SK-N-SH (cell line): ENCODE measurements at regions of chr2 and their contacts with region 1.

Region 1: DNA sequence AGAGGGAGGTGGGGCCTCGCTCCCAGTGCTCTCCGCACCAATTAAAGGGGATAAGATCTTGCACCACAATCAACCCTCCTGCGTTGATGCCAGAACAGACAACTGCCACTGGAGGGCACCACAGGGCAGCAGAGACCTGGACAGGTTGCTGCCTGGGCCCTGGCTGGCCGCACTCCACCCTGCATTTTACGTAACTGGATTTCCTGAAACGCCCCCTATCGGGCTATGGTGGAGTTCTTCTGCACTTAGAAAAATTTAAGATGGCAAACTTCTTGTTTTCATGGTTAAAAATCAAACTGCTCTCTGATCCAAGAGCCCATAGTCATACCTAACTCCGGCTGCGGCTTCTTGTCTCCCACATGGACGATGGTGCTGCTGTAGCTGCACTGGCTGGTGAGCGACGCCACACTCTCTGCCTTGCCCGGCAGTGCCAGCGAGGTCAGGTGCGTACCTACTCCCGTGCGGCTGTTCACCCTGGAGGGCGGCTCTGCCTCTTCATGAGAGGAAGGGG is 16.8 kb upstream of the HES6 start:
- DNase-seq: peak; percentile 95
- H3K4me3 ChIP-seq: no peak overlapping the region; a peak in 1 of 4 replicates
- H3K27ac ChIP-seq: no peak overlapping the region; a peak in 1 of 4 replicates
- H3K4me1 ChIP-seq: peaks cover 0 to 21% of the 10 kb centered on the region in 2 experiments; a peak in 1 of 4 replicates
- H3K27me3 ChIP-seq: no peaks in the 10 kb centered on the region
- CTCF ChIP-seq: peak; percentile 96
- EP300 ChIP-seq: peak in 1 of 2 experiments; percentile 6; a peak in 1 of 4 replicates
- RAD21 ChIP-seq: peak; percentile 82

Region 2: DNA sequence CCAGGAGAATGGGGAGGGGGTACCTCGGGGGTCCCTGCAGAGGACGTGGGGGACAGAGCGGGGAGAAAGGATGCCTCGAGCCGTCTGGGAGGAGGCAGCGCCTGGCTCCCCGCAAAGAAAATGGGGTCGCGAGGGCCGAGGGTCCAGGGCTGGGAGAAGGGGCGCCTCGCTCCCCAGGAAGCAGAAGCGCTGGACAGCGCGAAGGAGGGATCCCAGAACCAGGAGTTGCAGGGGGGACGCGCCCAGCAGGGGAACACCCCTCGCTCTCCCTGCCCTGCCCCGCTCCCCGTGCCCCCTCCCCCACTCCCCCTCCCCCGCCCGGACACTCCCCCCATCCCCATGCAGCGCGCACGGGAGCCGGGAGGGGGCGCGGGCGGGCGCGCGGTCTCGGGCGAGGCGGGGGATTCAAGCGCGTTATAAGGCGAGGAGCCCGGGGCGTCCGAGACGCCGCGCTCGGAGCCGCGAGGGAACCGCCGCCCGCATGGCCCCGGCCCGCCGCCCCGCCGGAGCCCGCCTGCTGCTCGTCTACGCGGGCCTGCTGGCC is 98.0 kb before region 1 on chr2 and contains the start of gene ERFE:
- CTCF ChIA-PET with region 1: interaction called, 11 read pairs
- POLR2A ChIA-PET with region 1: no interaction called
- DNase-seq: peak; percentile 96
- H3K4me3 ChIP-seq: peak within 1 kb of the TSS; percentile 41 to 49; a peak in 3 of 4 replicates
- H3K27ac ChIP-seq: no peak within 1 kb of the TSS
- H3K4me1 ChIP-seq: peaks cover 2 to 4% of the 10 kb centered on the region in 2 experiments; a peak in 1 of 4 replicates
- H3K27me3 ChIP-seq: no peaks in the 10 kb centered on the region
- CTCF ChIP-seq: no peak
- EP300 ChIP-seq: no peak
- RAD21 ChIP-seq: no peak
- polyA plus RNA-seq, gene ERFE: 1.3 and 1.5 TPM in 2 replicates

Region 3: GRCh38 chr2:238239872-238240751 is 16.5 kb before region 1 on chr2 and contains the start of gene HES6:
- CTCF ChIA-PET with region 1: interaction called, 26 read pairs
- POLR2A ChIA-PET with region 1: no interaction called
- DNase-seq: peak; percentile 98
- H3K4me3 ChIP-seq: peak within 1 kb of the TSS; percentile 54 to 74
- H3K27ac ChIP-seq: peak within 1 kb of the TSS in 1 of 2 experiments; percentile 83; a peak in 2 of 4 replicates
- H3K4me1 ChIP-seq: peaks cover 0 to 28% of the 10 kb centered on the region in 2 experiments; a peak in 1 of 4 replicates
- H3K27me3 ChIP-seq: no peaks in the 10 kb centered on the region; the same call in 1 of the 2 replicates
- CTCF ChIP-seq: no peak
- EP300 ChIP-seq: no peak
- RAD21 ChIP-seq: no peak
- polyA plus RNA-seq, gene HES6: 3.6 and 4.4 TPM in 2 replicates

Region 4: GRCh38 chr2:238270606-238271005 is 14.0 kb after region 1 on chr2:
- CTCF ChIA-PET with region 1: interaction called, 72 read pairs
- POLR2A ChIA-PET with region 1: no interaction called
- DNase-seq: peak; percentile 46
- H3K4me3 ChIP-seq: no peak overlapping the region
- H3K27ac ChIP-seq: no peak overlapping the region
- H3K4me1 ChIP-seq: peaks cover 0 to 3% of the 10 kb centered on the region in 2 experiments; a peak in 1 of 4 replicates
- H3K27me3 ChIP-seq: no peaks in the 10 kb centered on the region
- CTCF ChIP-seq: no peak
- EP300 ChIP-seq: no peak
- RAD21 ChIP-seq: no peak

Region 5: DNA sequence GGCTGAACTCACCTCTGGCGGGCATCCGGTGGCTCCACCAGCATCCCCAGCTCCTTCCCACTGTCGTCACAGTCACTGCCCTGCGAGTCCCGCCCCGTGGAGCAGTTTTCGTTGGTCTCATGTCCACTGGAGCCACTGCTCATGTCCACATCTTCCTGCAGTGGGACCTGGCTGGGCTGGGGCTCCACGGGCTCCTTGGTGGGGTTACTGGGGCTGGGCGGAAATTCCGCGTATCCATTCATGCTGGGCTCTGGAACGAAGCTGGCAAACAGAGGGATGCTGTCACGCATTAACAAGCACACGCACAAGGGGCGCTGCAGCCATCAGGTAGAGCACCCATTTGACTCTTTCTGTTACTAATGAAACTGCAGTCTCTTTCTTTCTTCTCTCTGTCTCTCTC is 21.0 kb after region 1 on chr2:
- CTCF ChIA-PET with region 1: interaction called, 72 read pairs
- POLR2A ChIA-PET with region 1: no interaction called
- DNase-seq: no peak
- H3K4me3 ChIP-seq: no peak overlapping the region
- H3K27ac ChIP-seq: no peak overlapping the region
- H3K4me1 ChIP-seq: no peaks in the 10 kb centered on the region
- H3K27me3 ChIP-seq: no peaks in the 10 kb centered on the region
- CTCF ChIP-seq: no peak; the same call in 1 of the 2 replicates
- EP300 ChIP-seq: no peak
- RAD21 ChIP-seq: no peak

Region 6: DNA sequence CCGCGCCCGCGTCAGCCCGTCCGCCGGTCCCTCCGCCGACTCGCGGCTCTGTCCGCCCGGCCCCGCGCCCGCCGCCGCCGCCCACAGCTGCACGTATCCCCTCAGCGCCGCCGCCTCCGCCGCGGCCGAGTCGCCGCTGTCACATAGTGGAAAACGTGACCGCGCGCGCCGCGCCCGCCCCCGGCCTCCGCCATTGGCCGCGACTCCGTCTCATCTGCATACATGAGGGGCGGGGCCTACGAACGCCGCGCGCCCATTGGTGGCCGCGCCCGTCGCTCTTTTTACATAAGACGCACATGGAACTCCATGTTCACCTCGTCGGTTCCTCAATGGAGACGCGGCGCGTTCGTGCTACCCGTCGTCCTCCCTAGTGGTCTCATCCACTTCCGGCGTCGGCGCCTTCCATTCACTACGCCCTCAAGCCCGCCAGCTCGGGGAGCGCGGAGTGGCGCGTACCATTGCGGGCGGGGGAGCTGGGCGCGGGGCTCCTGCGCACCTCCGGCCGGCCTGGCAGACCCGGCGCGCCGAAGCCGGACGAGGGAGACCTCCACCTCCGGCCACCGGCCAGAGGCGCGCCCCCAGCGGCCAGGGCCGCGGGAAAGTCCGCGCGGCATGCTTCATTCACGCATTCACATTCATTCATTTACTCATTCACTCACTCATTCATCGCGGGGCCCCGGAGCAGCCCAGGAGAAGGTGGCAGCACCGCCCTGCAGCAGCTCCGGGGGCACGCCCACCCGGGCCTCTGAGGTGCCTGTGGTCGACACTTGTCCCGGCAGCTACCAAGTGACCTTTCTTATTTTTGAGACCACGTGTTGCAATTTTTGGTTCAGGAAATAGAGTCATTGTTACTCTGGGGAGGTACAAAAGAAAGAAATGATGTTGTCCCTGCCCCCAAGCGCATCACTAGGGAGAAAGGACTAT is 32.3 kb after region 1 on chr2:
- CTCF ChIA-PET with region 1: interaction called, 12 read pairs
- POLR2A ChIA-PET with region 1: no interaction called
- DNase-seq: peak; percentile 98
- H3K4me3 ChIP-seq: peak overlapping the region; percentile 74 to 75
- H3K27ac ChIP-seq: peak overlapping the region in 1 of 2 experiments; percentile 67; a peak in 1 of 4 replicates
- H3K4me1 ChIP-seq: peaks cover 8 to 15% of the 10 kb centered on the region in 2 experiments; a peak in 3 of 4 replicates
- H3K27me3 ChIP-seq: no peaks in the 10 kb centered on the region; the same call in 1 of the 2 replicates
- CTCF ChIP-seq: peak; percentile 52
- EP300 ChIP-seq: 0 out of 4 replicates have a peak, but pooled peaks of 1 of the 2 experiments have one; percentile 15
- RAD21 ChIP-seq: no peak